ENCODE measurements at regions of chr12 and their contacts with region 1.

Region 1: GRCh38 chr12:49088190-49088931 is 6.2 kb downstream of the DHH start:
- DNase-seq: peak; percentile 80
- H3K4me3 Mint-ChIP-seq: no peak overlapping the region
- H3K27ac Mint-ChIP-seq: no peak overlapping the region
- H3K4me1 Mint-ChIP-seq: peaks cover 40% of the 10 kb centered on the region
- H3K27me3 Mint-ChIP-seq: peaks cover 51% of the 10 kb centered on the region

Region 2: GRCh38 chr12:48995061-48995879 is 93.1 kb before region 1 on chr12:
- CTCF ChIA-PET with region 1: interaction called, 34 read pairs
- intact Hi-C with region 1: loop called (anchors 1 kb)
- DNase-seq: peak; percentile 69
- H3K4me3 Mint-ChIP-seq: peak overlapping the region; percentile 10
- H3K27ac Mint-ChIP-seq: no peak overlapping the region
- H3K4me1 Mint-ChIP-seq: peaks cover 33% of the 10 kb centered on the region
- H3K27me3 Mint-ChIP-seq: peaks cover 54% of the 10 kb centered on the region

Region 3: GRCh38 chr12:49060237-49061156 is 27.9 kb before region 1 on chr12 and contains the start of gene KMT2D:
- CTCF ChIA-PET with region 1: interaction called, 128 read pairs
- intact Hi-C with region 1: loop called (anchors 1 kb)
- DNase-seq: peak; percentile 91
- H3K4me3 Mint-ChIP-seq: peak within 1 kb of the TSS; percentile 93
- H3K27ac Mint-ChIP-seq: peak within 1 kb of the TSS; percentile 96
- H3K4me1 Mint-ChIP-seq: peaks cover 51% of the 10 kb centered on the region
- H3K27me3 Mint-ChIP-seq: no peaks in the 10 kb centered on the region
- total RNA-seq, gene KMT2D: 44.9 to 49.0 TPM

Region 4: DNA sequence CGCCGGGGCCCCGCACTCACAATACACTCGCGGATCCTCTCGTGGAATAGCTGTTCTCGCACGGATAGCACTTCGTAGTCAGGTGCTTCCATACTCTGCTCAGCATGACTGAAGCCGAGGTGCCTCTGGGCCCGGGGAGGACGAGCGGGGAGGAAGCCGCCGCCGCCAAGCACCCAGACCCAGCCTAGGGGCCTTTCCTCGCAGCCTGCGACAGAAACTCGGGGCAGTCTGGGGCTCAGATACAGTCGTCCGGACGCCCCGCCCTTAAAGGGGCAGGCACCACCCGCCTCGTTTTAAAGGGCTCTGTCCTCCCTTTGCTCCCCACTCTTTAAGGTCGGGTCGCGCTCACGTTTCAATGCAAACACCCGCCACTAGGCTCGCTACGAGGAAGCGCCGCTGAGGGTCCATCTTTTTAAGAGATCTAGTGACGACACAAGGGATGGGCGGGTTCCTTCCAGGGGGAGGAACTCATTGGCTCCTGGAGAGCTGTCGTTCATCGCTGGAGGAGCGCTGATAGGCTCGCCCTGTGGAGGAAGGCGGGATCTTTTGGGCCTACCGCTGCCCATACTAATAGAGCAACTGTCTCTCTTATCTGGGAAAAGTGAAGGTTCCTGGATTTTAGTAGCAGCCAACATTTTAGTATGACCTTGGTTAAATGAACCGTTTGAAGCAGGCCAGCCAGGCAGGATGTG is 22.2 kb after region 1 on chr12 and contains the start of gene LMBR1L:
- CTCF ChIA-PET with region 1: interaction called, 209 read pairs
- intact Hi-C with region 1: loop called (anchors 1 kb)
- DNase-seq: peak; percentile 98
- H3K4me3 Mint-ChIP-seq: peak within 1 kb of the TSS; percentile 93
- H3K27ac Mint-ChIP-seq: peak within 1 kb of the TSS; percentile 94
- H3K4me1 Mint-ChIP-seq: peaks cover 37% of the 10 kb centered on the region
- H3K27me3 Mint-ChIP-seq: no peaks in the 10 kb centered on the region
- total RNA-seq, gene LMBR1L: 60.1 to 66.8 TPM

Region 5: GRCh38 chr12:49130151-49131050 is 42.0 kb after region 1 on chr12:
- CTCF ChIA-PET with region 1: interaction called, 19 read pairs
- intact Hi-C with region 1: loop called (anchors 1 kb)
- DNase-seq: peak; percentile 96
- H3K4me3 Mint-ChIP-seq: peak overlapping the region; percentile 97
- H3K27ac Mint-ChIP-seq: peak overlapping the region; percentile 100
- H3K4me1 Mint-ChIP-seq: peaks cover 43% of the 10 kb centered on the region
- H3K27me3 Mint-ChIP-seq: no peaks in the 10 kb centered on the region

Region 6: GRCh38 chr12:49170924-49171323 is 82.6 kb after region 1 on chr12:
- CTCF ChIA-PET with region 1: no interaction called
- intact Hi-C with region 1: no loop called
- DNase-seq: no peak
- H3K4me3 Mint-ChIP-seq: no peak overlapping the region
- H3K27ac Mint-ChIP-seq: no peak overlapping the region
- H3K4me1 Mint-ChIP-seq: no peaks in the 10 kb centered on the region
- H3K27me3 Mint-ChIP-seq: no peaks in the 10 kb centered on the region

Region 7: GRCh38 chr12:49232940-49233841 is 144.8 kb after region 1 on chr12:
- CTCF ChIA-PET with region 1: interaction called, 22 read pairs
- intact Hi-C with region 1: loop called (anchors 1 kb)
- DNase-seq: no peak
- H3K4me3 Mint-ChIP-seq: peak overlapping the region; percentile 85
- H3K27ac Mint-ChIP-seq: peak overlapping the region; percentile 81
- H3K4me1 Mint-ChIP-seq: peaks cover 12% of the 10 kb centered on the region
- H3K27me3 Mint-ChIP-seq: no peaks in the 10 kb centered on the region